Heart right ventricle (tissue), 16 donors: ENCODE measurements at regions of chr15 and their contacts with region 1.

Region 1: GRCh38 chr15:73972984-73973682 is 19.0 kb downstream of the STOML1 start:
- DNase-seq: peak; percentile 81 to 88
- ATAC-seq: peak; percentile 87 to 96 (median 93)
- H3K4me3 ChIP-seq: peak overlapping the region in 8 of 10 donors; percentile 6 to 40 (median 32)
- H3K27ac ChIP-seq: peak overlapping the region in 1 of 10 donors; percentile 52
- H3K4me1 ChIP-seq: peaks cover 0 to 17% (median 10%) of the 10 kb centered on the region in 9 donors
- H3K27me3 ChIP-seq: no peaks in the 10 kb centered on the region
- CTCF ChIP-seq: peak; percentile 74 to 88 (median 85)

Region 2: DNA sequence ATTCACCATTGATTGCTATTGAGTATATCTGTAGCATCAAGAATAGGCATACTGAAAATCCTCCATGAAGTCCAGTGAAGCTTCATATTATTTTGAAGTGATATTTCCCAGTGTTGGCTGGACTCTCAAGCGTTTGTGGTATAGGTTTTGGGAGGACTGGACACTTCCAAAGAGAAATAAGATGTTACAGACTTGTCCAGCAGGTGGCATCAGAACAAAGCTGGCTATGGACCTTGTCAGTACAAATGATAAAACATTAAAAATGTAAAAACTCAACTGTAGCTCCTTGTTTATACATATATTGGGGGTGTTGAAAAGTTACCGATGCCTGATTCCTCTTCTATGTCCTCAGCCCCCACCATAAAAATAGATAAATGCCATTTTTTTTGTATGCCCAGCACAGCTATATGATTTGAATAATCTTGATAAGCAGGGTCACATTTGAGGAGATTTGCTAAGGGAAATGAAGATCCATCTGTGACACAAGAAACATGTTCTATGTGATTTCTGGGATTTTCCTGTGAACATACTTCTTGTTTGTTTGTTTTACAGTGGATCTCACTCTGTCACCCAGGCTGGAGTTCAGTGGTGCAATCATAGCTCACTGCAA is 1373.2 kb before region 1 on chr15:
- intact Hi-C with region 1: loop called in 1 of 10 experiments (anchors 10 kb)
- DNase-seq: peak in 1 of 2 donors; percentile 32
- ATAC-seq: no peak
- H3K4me3 ChIP-seq: no peak overlapping the region
- H3K27ac ChIP-seq: no peak overlapping the region
- H3K4me1 ChIP-seq: no peaks in the 10 kb centered on the region
- H3K27me3 ChIP-seq: no peaks in the 10 kb centered on the region
- CTCF ChIP-seq: peak; percentile 43 to 75 (median 67)

Region 3: GRCh38 chr15:74036271-74037170 is 63.4 kb after region 1 on chr15:
- intact Hi-C with region 1: loop called in 9 of 10 experiments (anchors 1 to 5 kb)
- DNase-seq: peak; percentile 39 to 60
- ATAC-seq: peak; percentile 7 to 32 (median 24)
- H3K4me3 ChIP-seq: no peak overlapping the region
- H3K27ac ChIP-seq: peak overlapping the region in 2 of 10 donors; percentile 11 to 16
- H3K4me1 ChIP-seq: peaks cover 9 to 61% (median 42%) of the 10 kb centered on the region in 9 donors
- H3K27me3 ChIP-seq: no peaks in the 10 kb centered on the region
- CTCF ChIP-seq: peak in 8 of 9 donors; percentile 23 to 68 (median 56)

Region 4: GRCh38 chr15:74053941-74054529 is 80.9 kb after region 1 on chr15:
- intact Hi-C with region 1: loop called in 2 of 10 experiments (anchors 5 kb)
- DNase-seq: peak; percentile 58 to 76
- ATAC-seq: peak; percentile 68 to 86 (median 72)
- H3K4me3 ChIP-seq: peak overlapping the region in 2 of 10 donors; percentile 12 to 16
- H3K27ac ChIP-seq: peak overlapping the region in 3 of 10 donors; percentile 35 to 52 (median 35)
- H3K4me1 ChIP-seq: peaks cover 5 to 42% (median 22%) of the 10 kb centered on the region in 9 donors
- H3K27me3 ChIP-seq: no peaks in the 10 kb centered on the region
- CTCF ChIP-seq: peak; percentile 31 to 69 (median 60)

Region 5: GRCh38 chr15:74307827-74308644 is 334.9 kb after region 1 on chr15:
- intact Hi-C with region 1: loop called in 5 of 10 experiments (anchors 5 to 10 kb)
- DNase-seq: peak; percentile 41 to 66
- ATAC-seq: peak; percentile 76 to 87 (median 82)
- H3K4me3 ChIP-seq: no peak overlapping the region
- H3K27ac ChIP-seq: no peak overlapping the region
- H3K4me1 ChIP-seq: peaks cover 0 to 8% (median 0%) of the 10 kb centered on the region in 9 donors
- H3K27me3 ChIP-seq: peaks cover 0 to 55% (median 32%) of the 10 kb centered on the region in 7 donors
- CTCF ChIP-seq: peak; percentile 45 to 79 (median 75)

Region 6: DNA sequence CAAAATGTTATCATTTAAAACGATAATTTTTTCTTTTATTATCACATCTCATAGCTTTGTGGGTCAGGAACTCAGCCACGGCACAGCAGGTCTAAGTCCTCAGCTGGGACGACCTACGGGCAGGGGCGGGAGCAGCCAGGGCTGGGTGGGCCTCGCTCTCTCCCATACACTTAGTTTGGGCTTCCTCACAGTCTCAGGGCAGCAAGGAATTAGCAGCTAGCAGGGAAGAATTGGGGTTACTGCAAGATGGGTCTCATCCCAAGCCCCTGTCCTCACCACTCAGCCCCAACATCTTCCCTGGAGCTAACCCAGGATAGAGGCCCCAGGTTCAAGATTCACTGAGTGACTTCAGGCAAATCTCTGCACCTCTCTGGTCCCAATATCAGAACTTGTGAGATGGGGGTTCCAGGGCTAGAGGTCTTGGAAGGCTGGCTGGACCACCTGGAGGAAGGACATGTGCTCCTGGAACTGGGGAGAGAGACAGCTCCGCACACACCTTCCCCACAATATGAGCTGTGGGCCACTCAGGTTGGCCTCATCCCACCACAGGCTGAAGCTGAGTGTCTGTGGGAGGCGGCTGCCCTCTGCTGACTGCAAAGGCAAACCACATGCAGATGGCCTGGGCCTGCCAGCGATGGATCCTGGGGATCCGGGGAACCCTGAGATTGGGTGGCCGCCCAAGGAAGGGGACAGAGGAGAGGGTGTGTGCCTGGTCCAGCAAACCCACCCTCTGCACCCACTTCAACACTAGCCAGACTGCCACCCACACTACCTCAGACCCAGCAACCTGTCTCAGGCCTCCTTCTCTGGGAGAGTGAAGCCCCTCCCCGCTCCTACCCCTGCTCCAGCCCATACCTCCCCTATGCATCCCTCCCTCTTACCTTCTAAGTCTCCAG is 349.3 kb after region 1 on chr15:
- intact Hi-C with region 1: loop called in 5 of 10 experiments (anchors 2 to 10 kb)
- DNase-seq: peak; percentile 62 to 71
- ATAC-seq: peak in 7 of 8 donors; percentile 17 to 64 (median 54)
- H3K4me3 ChIP-seq: no peak overlapping the region
- H3K27ac ChIP-seq: no peak overlapping the region
- H3K4me1 ChIP-seq: peaks cover 16 to 33% (median 30%) of the 10 kb centered on the region in 9 donors
- H3K27me3 ChIP-seq: peaks cover 0 to 4% (median 0%) of the 10 kb centered on the region in 7 donors
- CTCF ChIP-seq: peak; percentile 80 to 94 (median 87)

Region 7: DNA sequence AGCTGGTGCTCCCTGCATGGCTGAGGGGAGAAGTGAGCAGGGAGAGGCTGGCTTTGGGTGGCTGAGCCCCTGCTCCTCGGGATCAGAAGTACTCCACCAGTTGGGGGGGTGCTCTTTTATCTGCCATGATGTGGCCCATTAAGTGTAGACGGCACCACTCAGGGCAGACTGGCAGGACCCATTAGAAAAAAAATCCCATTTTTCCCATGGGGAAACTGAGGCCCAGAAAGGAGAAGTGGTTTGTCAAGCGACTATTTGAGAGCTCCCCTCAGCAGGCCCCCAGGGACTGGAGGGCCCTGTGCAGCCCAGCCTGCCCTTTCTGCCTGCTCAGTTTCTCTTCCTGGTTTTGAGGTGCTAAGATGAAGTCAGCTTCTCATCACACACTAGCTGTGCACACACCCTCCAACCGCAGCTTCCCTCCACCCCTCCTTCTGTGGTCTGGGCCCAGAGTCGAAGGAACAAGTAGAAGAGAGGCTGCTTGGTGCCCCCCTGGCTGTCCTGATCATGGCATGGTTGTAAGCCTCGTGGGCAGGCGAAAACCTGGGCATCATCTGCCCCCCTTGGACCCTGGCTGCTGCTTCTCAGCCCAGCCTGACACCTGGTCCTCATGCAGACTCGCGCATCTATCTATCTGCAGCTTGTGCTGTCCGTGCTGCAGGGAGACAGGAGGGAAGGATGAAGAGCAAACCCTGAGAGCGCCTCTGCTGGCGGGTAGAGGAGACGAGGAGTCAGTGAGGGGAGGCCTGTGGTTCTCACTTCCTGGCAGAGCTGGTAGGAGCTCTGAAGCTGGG is 814.3 kb after region 1 on chr15:
- intact Hi-C with region 1: no loop called
- DNase-seq: peak in 1 of 2 donors; percentile 62
- ATAC-seq: peak; percentile 22 to 50 (median 32)
- H3K4me3 ChIP-seq: peak overlapping the region in 4 of 10 donors; percentile 8 to 88 (median 20)
- H3K27ac ChIP-seq: peak overlapping the region; percentile 14 to 98 (median 90)
- H3K4me1 ChIP-seq: peaks cover 59 to 99% (median 98%) of the 10 kb centered on the region in 9 donors
- H3K27me3 ChIP-seq: no peaks in the 10 kb centered on the region
- CTCF ChIP-seq: peak in 6 of 9 donors; percentile 38 to 65 (median 50)